Panc1 (cell line): ENCODE measurements at regions of chr20 and their contacts with region 1.

Region 1: DNA sequence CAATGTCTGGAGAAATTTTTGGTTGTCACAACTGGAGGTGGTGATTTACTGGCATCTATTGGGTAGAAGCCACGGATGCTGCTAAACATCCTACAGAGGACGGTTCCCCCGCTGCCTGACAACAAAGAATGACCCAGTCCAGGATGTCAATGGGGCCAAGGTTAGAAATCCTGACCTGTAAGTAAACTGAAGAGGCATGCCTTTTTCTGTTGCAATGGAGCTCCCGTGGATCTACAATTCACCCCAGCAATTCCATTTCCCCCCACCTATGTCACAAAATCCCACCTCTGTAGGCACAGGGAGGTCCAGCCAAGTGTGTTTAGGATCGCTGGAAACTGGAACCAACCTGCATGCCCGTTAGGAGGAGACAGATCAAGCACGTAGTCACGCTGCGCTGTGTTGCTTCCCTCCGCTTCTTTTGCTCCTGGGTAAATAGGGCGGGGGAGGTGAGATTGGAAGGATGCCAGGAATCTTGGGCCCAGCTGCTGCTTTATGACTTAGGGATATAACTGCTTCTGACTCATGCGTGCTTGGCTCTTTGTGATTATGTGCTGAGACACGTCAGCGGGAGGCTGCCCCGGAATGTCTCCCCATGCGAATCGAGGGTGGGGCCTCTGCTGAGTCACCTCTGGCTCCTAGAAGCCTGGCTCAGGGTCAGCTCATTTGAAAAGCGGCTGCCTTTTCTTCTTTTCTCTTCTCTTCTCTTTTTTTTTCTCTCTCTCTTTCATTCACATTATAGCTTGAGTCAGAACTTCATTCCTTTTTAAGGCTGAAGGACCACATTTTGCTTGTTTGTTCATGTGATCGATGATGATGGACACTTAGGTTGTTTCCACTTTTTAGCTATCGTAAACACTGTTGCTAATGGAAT is 12.4 kb upstream of the PEDS1 start:
- DNase-seq: peak; percentile 99
- ATAC-seq: peak; percentile 95
- H3K4me3 ChIP-seq: peak overlapping the region; percentile 38 to 64
- H3K27ac ChIP-seq: peak overlapping the region; percentile 99
- H3K4me1 ChIP-seq: peaks cover 47% of the 10 kb centered on the region
- H3K27me3 ChIP-seq: no peaks in the 10 kb centered on the region
- CTCF ChIP-seq: no peak

Region 2: GRCh38 chr20:49964964-49965780 is 200.7 kb before region 1 on chr20:
- CTCF ChIA-PET with region 1: no interaction called
- POLR2A ChIA-PET with region 1: no interaction called
- in situ Hi-C with region 1: no loop called
- intact Hi-C with region 1: no loop called
- DNase-seq: no peak
- ATAC-seq: peak; percentile 86
- H3K4me3 ChIP-seq: no peak overlapping the region
- H3K27ac ChIP-seq: no peak overlapping the region
- H3K4me1 ChIP-seq: no peaks in the 10 kb centered on the region
- H3K27me3 ChIP-seq: no peaks in the 10 kb centered on the region
- CTCF ChIP-seq: peak; percentile 85

Region 3: DNA sequence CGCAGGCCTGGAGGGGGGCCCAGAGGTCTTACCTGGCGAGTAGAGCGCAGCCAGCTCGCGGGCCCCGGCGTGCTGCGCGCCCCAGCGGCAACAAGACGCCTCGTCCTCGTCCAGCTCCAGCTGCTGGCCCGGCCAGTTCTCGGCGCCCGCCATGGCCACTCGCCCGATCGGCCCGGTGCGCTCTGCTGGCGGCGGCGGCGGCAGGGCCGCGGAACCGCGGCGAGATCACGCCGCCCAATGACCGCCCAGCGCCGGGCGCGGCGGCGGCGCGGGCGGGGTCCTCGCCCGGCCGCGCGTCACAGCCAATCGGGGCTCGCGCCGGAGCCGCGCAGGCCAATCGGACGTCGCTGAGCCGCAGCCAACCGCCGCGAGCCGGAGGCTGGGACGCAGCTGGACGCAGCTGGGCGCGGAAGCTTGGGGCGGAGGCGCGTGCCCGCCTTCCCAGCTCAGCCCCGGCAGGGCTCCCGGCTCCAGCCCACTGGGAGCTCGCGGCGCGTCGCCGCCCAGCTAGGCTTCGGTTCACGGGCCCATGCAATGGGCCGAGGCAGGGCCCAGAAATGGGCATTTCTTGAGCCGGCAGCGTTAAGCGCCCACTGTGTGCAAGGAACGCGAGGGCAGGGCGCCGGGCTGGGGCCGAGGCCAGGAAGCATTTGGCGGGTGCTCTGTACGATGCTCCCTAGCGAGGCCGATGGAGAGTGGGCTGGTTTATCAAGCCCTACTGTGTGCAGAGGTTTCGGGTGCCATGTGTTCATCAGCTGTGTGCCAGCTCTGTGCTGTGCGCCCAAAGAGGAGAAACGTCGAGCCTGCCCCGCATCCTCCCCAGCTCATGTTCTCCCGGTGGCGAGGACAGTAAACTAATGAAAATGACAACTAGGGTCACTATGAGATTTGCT is 12.2 kb before region 1 on chr20 and contains the start of gene PEDS1:
- CTCF ChIA-PET with region 1: no interaction called
- POLR2A ChIA-PET with region 1: interaction called, 10 read pairs
- in situ Hi-C with region 1: no loop called
- intact Hi-C with region 1: no loop called
- DNase-seq: no peak
- ATAC-seq: peak; percentile 94
- H3K4me3 ChIP-seq: peak within 1 kb of the TSS; percentile 92 to 95
- H3K27ac ChIP-seq: peak within 1 kb of the TSS; percentile 97
- H3K4me1 ChIP-seq: peaks cover 41% of the 10 kb centered on the region
- H3K27me3 ChIP-seq: no peaks in the 10 kb centered on the region
- CTCF ChIP-seq: no peak
- total RNA-seq, gene PEDS1: 88.9 TPM